ENCODE measurements at regions of chr3 and their contacts with region 1.

Region 1: DNA sequence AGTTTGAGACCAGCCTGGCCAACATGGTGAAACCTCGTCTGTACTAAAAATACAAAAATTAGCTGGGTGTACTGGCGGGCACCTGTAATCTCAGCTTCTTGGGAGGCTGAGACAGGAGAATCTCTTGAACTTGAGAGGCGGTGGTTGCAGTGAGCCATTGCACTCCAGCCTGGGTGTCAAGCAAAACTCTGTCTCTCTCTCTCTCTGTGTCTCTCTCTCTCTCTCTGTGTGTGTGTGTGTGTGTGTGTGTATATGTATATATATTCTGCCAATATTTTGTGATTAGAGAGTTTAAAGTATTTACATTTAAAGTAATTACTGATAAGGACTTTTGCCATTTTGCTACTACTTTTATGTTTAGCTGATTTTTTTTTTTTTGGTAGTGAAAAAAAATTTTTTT is 15.7 kb downstream of the RBM6 start:
- DNase-seq: no peak
- H3K4me3 ChIP-seq: no peak overlapping the region
- H3K27ac ChIP-seq: no peak overlapping the region
- H3K4me1 ChIP-seq: no peaks in the 10 kb centered on the region
- H3K27me3 ChIP-seq: no peaks in the 10 kb centered on the region
- CTCF ChIP-seq: no peak
- EP300 ChIP-seq: no peak
- POLR2A ChIP-seq: no peak

Region 2: DNA sequence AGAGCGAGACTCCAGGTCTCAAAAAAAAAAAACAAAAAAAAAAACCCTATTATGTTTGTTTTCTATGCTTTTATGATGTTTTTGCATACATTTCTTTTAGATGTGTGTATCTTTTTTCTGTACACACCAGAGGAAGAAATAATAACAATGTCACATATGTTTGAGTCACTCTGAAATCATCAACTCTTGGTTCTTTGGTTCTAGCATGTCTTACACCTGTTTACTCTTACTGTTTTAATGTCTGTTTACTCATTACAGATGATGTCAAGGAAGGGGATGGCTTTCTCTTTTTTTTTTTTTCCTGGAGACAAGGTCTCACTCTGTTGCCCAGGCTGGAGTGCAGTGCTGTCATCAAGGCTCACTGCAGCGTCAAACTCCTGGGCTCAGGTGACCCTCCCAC is 567.9 kb before region 1 on chr3:
- in situ Hi-C with region 1: no loop called
- intact Hi-C with region 1: no loop called
- DNase-seq: no peak
- H3K4me3 ChIP-seq: no peak overlapping the region
- H3K27ac ChIP-seq: no peak overlapping the region
- H3K4me1 ChIP-seq: peaks cover 0 to 45% (median 29%) of the 10 kb centered on the region in 4 donors
- H3K27me3 ChIP-seq: no peaks in the 10 kb centered on the region
- CTCF ChIP-seq: no peak
- EP300 ChIP-seq: no peak
- POLR2A ChIP-seq: no peak

Region 3: DNA sequence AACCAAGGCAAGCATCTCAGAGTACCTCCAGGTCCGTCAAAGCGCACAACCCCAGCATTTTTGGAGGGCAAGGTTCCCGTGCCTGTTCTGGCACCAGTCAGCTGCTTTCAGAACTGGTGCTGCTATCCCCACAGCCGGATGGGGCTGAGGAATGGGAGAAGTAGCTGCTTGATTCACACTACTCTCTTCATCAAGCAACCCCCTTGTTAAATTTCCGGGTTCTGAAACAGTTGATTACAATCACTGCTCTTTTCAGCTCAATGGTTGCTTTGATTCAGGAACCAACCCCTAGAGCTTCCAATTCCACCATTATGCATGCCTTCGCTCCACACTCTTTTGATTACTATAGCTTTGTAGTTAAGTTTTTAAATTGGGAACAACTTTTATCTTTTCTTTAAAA is 129.6 kb before region 1 on chr3:
- in situ Hi-C with region 1: no loop called
- intact Hi-C with region 1: no loop called
- DNase-seq: no peak
- H3K4me3 ChIP-seq: no peak overlapping the region
- H3K27ac ChIP-seq: no peak overlapping the region
- H3K4me1 ChIP-seq: no peaks in the 10 kb centered on the region
- H3K27me3 ChIP-seq: no peaks in the 10 kb centered on the region
- CTCF ChIP-seq: no peak
- EP300 ChIP-seq: no peak
- POLR2A ChIP-seq: no peak

Region 4: DNA sequence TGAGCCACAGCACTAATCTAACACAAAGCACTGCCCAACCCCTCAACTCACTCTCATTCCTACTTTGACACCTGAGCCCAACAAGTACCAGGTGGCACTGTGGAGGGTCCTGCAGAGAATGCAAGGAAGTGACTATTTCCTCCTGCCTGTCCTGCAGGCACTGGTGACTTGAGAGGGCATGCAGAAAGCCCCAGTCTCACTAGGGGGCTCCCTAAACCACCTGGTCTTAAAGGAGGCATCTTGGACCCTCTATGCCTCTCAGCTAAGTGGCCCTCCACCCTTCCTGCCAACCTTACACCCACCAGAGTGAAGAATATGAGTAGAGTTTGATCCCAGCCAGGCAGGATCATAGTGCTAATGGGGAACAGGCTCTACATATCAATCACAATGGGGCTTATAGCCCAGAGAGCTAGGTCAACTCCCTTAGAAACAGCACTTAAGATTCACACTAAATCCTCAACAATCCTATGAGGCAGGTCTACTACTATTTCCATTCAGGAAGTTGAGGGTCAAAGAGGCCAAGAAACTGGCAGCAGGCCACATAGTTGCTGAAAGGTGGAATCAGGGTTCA is 114.4 kb before region 1 on chr3:
- in situ Hi-C with region 1: no loop called
- intact Hi-C with region 1: no loop called
- DNase-seq: no peak
- H3K4me3 ChIP-seq: no peak overlapping the region
- H3K27ac ChIP-seq: no peak overlapping the region
- H3K4me1 ChIP-seq: peaks cover 0 to 4% (median 1%) of the 10 kb centered on the region in 4 donors
- H3K27me3 ChIP-seq: no peaks in the 10 kb centered on the region
- CTCF ChIP-seq: peak in 1 of 5 experiments; percentile 15
- EP300 ChIP-seq: no peak
- POLR2A ChIP-seq: no peak

Region 5: GRCh38 chr3:51477360-51477711 is 1521.7 kb after region 1 on chr3:
- in situ Hi-C with region 1: no loop called
- intact Hi-C with region 1: loop called (anchors 10 kb)
- DNase-seq: no peak
- H3K4me3 ChIP-seq: no peak overlapping the region
- H3K27ac ChIP-seq: no peak overlapping the region
- H3K4me1 ChIP-seq: peaks cover 0 to 12% (median 5%) of the 10 kb centered on the region in 4 donors
- H3K27me3 ChIP-seq: no peaks in the 10 kb centered on the region
- CTCF ChIP-seq: no peak
- EP300 ChIP-seq: no peak
- POLR2A ChIP-seq: no peak

Measured in transverse colon (tissue), 4 donors.